ENCODE measurements at regions of chr2 and their contacts with region 1.

Region 1: DNA sequence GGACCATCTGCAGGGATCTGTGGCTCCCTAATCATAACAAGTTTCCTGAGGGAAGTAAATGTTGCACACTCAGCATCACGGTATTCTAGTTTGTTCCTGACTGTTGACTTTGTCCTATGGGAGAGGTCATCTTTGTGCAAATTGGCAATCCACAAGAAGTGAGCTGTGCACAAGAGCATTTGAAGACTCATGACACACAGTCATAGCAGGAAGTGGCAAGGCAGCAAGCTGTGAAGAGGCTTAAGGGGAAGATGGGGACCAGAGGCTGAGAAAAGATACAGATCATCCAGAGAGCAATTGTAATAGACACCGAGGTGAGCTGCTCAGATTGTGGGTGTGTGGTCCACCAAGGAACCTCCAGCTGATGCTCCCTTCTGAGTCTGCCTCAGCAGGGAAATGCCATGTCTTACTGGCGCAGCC is 2.7 kb downstream of the TNP1 start:
- DNase-seq: peak; percentile 29
- H3K4me3 Mint-ChIP-seq: no peak overlapping the region
- H3K27ac Mint-ChIP-seq: peak overlapping the region; percentile 88
- H3K4me1 Mint-ChIP-seq: peaks cover 45% of the 10 kb centered on the region
- H3K27me3 Mint-ChIP-seq: no peaks in the 10 kb centered on the region

Region 2: GRCh38 chr2:216880509-216881184 is 23.5 kb after region 1 on chr2:
- intact Hi-C with region 1: loop called (anchors 1 kb)
- DNase-seq: peak; percentile 37
- H3K4me3 Mint-ChIP-seq: no peak overlapping the region
- H3K27ac Mint-ChIP-seq: no peak overlapping the region
- H3K4me1 Mint-ChIP-seq: peaks cover 27% of the 10 kb centered on the region
- H3K27me3 Mint-ChIP-seq: no peaks in the 10 kb centered on the region

Region 3: DNA sequence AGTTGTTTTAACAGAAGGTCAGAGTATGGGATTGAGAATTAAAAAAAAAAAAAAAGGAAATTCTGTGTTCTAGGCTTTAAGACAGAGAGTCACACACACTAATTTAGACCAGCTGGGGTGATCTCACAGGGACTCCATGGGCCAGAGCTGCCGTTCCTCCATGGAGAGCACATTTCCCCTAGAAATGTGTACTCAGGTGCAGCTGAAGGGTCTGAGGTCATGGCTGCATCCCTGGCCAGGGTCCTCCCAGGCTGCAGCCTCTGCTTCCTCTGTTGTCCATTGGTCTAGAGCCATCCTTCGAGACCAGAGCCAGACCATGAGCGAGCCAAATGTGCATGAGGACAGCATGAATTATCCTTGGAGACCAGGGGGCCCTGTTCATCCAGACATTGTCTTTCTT is 192.8 kb after region 1 on chr2:
- intact Hi-C with region 1: no loop called
- DNase-seq: no peak
- H3K4me3 Mint-ChIP-seq: no peak overlapping the region
- H3K27ac Mint-ChIP-seq: no peak overlapping the region
- H3K4me1 Mint-ChIP-seq: no peaks in the 10 kb centered on the region
- H3K27me3 Mint-ChIP-seq: peaks cover 17% of the 10 kb centered on the region

Measured in activated T-helper 2 cell treated with anti-CD3 and anti-CD28 coated beads, Interferon-gamma antibody, Interleukin-2, Interleukin-4, amounts not matched to agents 10 μg/mL and 5 μg/mL and 100 μg/mL, durations not matched to agents 14 hours and 24 hours and 36 hours (primary cell).